Mammary epithelial cell (primary cell): ENCODE measurements at regions of chr6 and their contacts with region 1.

Region 1: GRCh38 chr6:42629845-42630244 is 66.0 kb downstream of the UBR2 start:
- DNase-seq: no peak
- H3K4me3 ChIP-seq: no peak overlapping the region
- H3K27ac ChIP-seq: no peak overlapping the region
- H3K4me1 ChIP-seq: no peaks in the 10 kb centered on the region
- H3K27me3 ChIP-seq: no peaks in the 10 kb centered on the region
- CTCF ChIP-seq: no peak

Region 2: DNA sequence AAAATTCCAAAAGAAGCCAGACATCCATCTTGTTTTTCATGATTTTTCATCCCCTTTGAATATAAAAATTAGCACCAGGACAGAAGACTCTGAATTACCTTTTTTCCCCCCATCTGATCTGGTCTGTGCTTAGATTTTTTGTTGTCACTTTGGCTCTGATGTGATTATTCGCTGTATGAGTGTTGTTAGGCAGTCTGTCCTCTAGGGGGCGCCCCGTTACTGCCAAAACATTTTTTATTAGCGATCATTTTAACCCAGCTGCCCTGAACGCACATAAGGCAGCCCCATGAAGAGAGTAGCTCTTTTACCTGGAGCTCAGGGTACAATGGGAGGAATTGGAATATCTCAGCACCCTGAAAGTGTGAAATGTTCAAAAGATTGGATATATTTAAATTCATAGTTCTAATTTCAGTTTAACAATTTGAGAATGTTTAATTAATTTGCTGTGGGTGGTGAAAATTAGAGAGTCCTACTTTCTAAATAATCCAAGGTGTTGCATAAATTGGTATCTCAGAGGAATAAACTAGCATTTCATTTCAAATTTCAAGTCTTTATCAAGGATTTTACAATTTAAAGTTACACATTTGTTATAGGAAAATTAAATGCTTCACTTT is 31.8 kb after region 1 on chr6:
- CTCF ChIA-PET with region 1: no interaction called
- dilution Hi-C with region 1: loop called (anchors 5 kb)
- in situ Hi-C with region 1: no loop called
- intact Hi-C with region 1: no loop called
- DNase-seq: peak; percentile 51
- H3K4me3 ChIP-seq: no peak overlapping the region
- H3K27ac ChIP-seq: no peak overlapping the region
- H3K4me1 ChIP-seq: no peaks in the 10 kb centered on the region
- H3K27me3 ChIP-seq: no peaks in the 10 kb centered on the region
- CTCF ChIP-seq: peak; percentile 76 to 86